HEK293T (cell line): ENCODE measurements at regions of chr5 and their contacts with region 1.

Region 1: DNA sequence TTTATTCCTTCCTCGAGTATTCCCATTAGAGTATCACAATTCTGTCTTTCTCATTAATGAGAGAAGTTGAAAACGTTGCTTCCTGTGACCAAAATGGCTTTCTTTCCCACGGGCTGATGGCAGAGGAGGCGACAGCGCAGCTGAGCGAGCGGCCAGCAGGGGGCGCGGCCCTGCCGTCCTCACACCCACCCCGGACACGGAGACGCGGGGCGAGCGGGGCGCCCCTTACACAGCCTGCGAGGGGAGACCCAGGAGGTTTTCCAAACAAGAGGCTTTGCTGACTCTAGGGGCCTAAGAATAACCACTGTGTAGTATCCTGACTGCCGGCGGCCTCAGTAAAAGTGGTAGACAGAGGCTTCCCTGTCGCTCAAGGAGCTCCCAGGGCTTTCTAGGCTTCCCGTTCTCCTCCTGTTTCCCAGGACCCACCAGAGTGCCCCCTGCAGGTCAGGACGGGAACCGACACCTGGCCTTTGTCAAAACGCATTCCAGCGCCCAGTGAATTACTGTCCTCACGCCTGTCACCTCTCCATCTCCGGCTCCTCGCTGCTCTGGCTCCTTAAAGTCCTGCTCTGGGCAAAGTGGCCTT is 27.3 kb upstream of the FGF1 start:
- DNase-seq: peak; percentile 86

Region 2: GRCh38 chr5:142422429-142422828 is 290.8 kb before region 1 on chr5:
- CTCF ChIA-PET with region 1: no interaction called
- POLR2A ChIA-PET with region 1: no interaction called
- DNase-seq: no peak

Region 3: DNA sequence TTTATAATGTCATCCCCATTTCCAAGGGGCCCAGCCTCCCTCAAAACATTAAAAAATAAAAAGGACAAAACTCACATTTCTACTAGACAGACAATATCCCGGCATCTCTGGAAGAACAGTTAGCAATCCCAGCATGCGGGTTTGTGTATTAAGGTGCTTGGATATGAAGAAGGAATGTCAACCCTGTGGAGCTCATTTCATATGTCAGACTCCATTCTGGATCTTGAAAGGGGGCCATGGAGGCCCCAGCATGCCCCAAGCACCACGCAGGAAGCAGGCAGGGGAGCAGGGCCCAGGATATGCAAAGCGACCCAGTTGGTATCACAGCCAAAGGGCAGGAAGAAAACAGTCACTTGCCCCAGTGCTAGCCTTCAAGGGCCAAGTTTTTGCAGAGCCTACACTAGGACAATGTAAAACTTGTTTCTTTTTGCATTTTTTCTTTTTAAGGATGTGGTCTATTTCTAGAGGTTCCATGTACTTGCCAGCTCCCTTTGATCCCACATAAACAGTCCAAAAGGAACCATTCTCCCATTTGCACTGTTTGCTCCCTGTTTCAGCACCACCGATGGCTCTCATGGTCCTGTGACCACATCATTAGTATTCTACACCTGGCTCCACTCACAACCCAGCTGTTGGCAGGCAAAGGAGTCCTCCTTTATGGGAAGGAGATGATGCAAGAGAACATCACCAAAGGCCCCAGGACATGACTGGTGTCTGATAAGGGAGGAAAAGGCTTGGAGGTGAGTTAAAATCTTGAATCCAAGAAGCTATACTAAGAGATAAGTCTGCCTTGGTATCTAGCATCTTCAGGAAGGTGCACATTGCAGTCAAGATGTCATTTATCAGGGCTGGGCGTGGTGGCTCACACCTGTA is 85.6 kb before region 1 on chr5:
- CTCF ChIA-PET with region 1: interaction called, 11 read pairs
- POLR2A ChIA-PET with region 1: no interaction called
- DNase-seq: no peak

Region 4: GRCh38 chr5:142671801-142672200 is 41.4 kb before region 1 on chr5:
- CTCF ChIA-PET with region 1: interaction called, 14 read pairs
- POLR2A ChIA-PET with region 1: no interaction called
- DNase-seq: no peak

Region 5: DNA sequence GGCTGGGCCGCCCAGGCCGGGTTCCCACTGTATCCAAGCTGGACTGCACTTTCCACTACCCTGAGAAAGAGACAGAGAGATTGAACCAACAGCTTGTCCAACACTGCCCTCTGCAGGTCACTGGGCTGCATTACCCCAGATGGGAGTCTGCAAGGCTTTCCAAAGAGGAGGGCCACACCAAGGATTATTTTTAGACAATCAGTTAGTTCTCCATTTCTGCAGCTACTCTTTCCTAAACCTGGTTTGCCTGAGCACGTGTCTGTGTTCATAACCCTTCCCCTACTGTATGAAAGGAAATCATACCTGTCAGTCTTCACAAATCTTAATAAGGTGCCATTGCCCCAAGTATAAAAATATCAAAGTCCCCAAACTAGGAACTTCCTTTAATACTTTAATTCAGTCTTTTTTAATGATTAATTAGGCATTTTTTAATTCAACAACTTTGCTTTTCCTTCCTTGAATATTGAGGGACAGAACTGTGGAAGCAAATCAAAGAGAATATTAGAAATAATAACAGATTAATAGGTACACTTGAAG is 14.0 kb before region 1 on chr5:
- CTCF ChIA-PET with region 1: interaction called, 48 read pairs
- POLR2A ChIA-PET with region 1: no interaction called
- DNase-seq: peak; percentile 84

Region 6: DNA sequence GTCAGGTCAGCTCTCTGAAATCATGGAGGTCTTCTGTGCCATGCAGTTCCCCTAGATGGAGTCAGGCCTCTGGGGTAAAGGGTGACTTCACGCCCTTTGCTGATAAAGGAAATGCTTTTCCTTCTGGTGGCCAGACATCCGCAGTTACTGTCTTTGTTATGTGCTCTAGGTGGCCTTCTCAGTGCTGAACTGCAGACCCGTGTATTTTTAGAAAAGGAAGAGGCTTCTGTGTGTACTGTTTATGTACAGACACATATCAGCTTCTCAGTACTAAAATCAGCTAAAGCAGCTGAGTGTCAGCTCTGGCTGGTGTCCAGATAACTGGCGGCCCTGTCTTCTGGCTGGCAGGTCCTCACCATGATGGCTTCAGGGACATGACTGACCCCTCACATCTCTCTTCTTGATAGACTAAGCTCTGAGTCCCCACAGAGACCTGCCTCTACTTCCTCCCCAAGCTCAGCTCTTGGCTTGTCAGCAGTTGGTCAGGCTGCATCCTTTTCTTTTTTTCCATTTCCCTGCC is 132.2 kb after region 1 on chr5:
- CTCF ChIA-PET with region 1: no interaction called
- POLR2A ChIA-PET with region 1: no interaction called
- DNase-seq: no peak

Region 7: GRCh38 chr5:142881076-142881783 is 168.0 kb after region 1 on chr5:
- CTCF ChIA-PET with region 1: interaction called, 68 read pairs
- POLR2A ChIA-PET with region 1: no interaction called
- DNase-seq: no peak